Right ventricle myocardium inferior (tissue), 1 donor: ENCODE measurements at regions of chr19 and their contacts with region 1.

Region 1: DNA sequence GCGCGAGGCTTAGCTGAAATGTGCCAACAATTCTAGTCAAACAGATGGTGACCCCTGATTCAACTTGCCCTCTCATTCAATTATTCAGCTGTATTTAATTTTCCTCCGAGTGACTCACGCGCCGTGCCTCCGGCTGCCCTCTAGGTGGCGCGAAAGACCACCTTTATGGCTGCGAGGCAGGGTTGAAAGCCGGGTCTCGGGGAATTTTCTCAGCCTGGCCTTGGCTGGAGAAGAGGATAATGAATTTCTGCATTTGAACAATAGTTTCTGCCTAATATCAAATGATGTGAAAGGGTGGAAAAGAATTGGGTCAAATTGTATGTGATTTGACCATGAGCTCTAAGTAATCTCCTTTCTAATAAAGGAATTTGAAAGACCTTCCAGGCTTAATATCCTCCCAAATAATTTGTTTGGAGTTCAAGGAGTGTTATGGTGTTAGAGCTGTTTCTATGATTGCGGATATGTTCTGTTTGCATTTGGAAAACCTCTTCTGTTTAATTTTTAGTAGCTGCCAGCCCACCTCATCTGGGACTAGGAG is 310.9 kb downstream of the ZNF536 start:
- DNase-seq: no peak
- ATAC-seq: peak; percentile 75

Region 2: DNA sequence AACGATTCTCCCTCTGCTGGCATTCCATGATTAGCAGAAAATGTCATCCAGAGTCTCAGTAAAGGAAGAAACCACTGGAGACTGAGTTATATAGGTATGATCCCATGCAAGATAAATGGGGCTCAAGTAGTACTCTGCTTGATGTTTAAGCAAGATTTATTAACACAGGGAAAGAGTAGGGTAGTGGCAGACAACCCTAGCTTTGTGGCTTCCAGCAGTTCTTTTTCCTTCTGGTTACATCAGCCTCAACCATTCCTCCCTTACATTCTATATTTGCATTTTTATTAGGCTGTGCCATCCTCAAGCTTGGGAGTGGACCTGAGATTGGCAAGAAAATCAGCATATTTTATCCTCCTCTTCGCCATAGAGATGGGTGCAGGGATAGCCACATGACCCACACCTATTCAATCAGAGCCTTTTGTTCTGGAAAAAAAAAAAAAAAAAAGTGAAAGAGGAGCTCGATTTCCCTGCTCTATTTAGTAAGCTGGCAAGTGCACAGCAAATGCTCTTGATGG is 91.2 kb after region 1 on chr19:
- intact Hi-C with region 1: no loop called
- DNase-seq: no peak
- ATAC-seq: no peak

Region 3: GRCh38 chr19:30784850-30785457 is 101.9 kb after region 1 on chr19:
- intact Hi-C with region 1: loop called (anchors 5 kb)
- DNase-seq: peak; percentile 82
- ATAC-seq: peak; percentile 56

Region 4: DNA sequence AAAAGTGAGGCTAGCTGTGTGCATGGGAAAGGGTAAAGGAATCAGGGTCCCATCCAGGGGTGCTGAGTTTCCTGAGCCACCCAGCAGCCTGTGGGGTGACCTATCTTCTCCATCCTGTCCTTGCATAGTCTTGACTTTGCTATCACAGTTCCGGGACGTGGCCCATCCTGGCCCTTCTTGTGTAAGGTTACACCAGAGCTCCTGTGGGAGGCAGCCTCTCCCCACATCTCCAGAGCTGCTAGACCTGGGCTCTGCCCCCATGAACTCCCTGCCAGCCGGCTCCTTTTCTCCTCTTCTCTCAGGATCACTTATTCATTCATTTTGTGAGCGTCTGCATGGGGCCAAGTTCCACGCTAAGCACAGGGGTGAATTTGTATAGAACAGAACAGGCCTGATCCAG is 427.3 kb after region 1 on chr19:
- intact Hi-C with region 1: loop called (anchors 10 kb)
- DNase-seq: no peak
- ATAC-seq: no peak

Region 5: GRCh38 chr19:31349160-31349881 is 666.3 kb after region 1 on chr19 and contains the start of gene TSHZ3:
- intact Hi-C with region 1: loop called (anchors 10 kb)
- DNase-seq: peak; percentile 92
- ATAC-seq: peak; percentile 87
- total RNA-seq, gene TSHZ3: 3.5 TPM

Region 6: GRCh38 chr19:31548941-31549340 is 865.9 kb after region 1 on chr19:
- intact Hi-C with region 1: loop called (anchors 2 kb)
- DNase-seq: no peak
- ATAC-seq: peak; percentile 28

Region 7: DNA sequence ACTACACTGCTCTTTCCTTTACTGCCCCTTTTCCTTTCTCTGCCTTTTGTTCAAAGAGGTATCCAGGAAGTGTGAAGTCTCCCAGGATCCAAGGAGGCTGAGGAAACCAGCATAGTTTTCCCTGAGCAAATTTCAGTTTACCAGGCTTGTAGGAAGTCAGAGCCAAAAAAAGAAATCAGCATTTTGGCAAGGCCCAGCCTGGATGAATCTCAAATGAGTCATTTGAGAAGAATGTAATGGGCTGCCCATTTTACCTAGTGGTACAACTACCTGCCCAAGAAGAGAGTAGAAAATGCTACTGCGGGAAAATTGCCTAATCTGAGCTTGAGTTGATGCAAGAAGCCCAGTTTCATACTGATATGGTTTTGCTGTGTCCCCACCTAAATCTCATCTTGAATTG is 1378.2 kb after region 1 on chr19:
- intact Hi-C with region 1: loop called (anchors 5 kb)
- DNase-seq: no peak
- ATAC-seq: no peak

Region 8: GRCh38 chr19:32224371-32225244 is 1541.5 kb after region 1 on chr19:
- intact Hi-C with region 1: loop called (anchors 1 kb)
- DNase-seq: peak; percentile 80
- ATAC-seq: peak; percentile 93